Calu3 (cell line): ENCODE measurements at regions of chr14 and their contacts with region 1.

Region 1: GRCh38 chr14:102849526-102850379 is 72.5 kb downstream of the TRAF3 start:
- DNase-seq: no peak
- H3K4me3 Mint-ChIP-seq: no peak overlapping the region
- H3K27ac Mint-ChIP-seq: no peak overlapping the region
- H3K4me1 Mint-ChIP-seq: peaks cover 15% of the 10 kb centered on the region
- H3K27me3 Mint-ChIP-seq: no peaks in the 10 kb centered on the region
- CTCF ChIP-seq: no peak

Region 2: DNA sequence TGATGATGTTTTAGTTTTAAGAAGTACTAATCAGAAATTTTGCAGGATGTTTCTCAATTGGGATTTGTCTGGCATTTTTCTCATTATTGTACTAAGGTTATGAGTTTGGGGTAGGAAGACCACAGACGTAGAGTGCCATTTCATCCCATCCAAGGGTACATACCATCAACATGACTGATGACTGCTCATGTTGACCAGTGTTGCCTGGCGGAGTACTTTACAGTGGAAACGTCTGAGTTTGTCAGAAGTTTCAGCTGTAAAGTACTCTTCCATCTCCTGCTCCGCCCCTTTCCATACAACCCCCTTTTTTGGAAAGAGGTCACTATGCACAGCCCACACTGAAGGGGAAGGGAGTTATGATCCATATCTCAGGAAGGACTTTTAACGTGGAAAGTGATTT is 183.1 kb before region 1 on chr14:
- CTCF ChIA-PET with region 1: no interaction called
- intact Hi-C with region 1: loop called (anchors 2 kb)
- DNase-seq: no peak
- H3K4me3 Mint-ChIP-seq: no peak overlapping the region
- H3K27ac Mint-ChIP-seq: no peak overlapping the region
- H3K4me1 Mint-ChIP-seq: peaks cover 42% of the 10 kb centered on the region
- H3K27me3 Mint-ChIP-seq: no peaks in the 10 kb centered on the region
- CTCF ChIP-seq: no peak

Region 3: GRCh38 chr14:102795060-102795925 is 54.5 kb before region 1 on chr14:
- CTCF ChIA-PET with region 1: interaction called, 10 read pairs
- intact Hi-C with region 1: no loop called
- DNase-seq: peak; percentile 62
- H3K4me3 Mint-ChIP-seq: no peak overlapping the region
- H3K27ac Mint-ChIP-seq: peak overlapping the region; percentile 77
- H3K4me1 Mint-ChIP-seq: no peaks in the 10 kb centered on the region
- H3K27me3 Mint-ChIP-seq: no peaks in the 10 kb centered on the region
- CTCF ChIP-seq: no peak

Region 4: GRCh38 chr14:102939820-102940561 is 90.2 kb after region 1 on chr14:
- CTCF ChIA-PET with region 1: no interaction called
- intact Hi-C with region 1: no loop called
- DNase-seq: no peak
- H3K4me3 Mint-ChIP-seq: no peak overlapping the region
- H3K27ac Mint-ChIP-seq: no peak overlapping the region
- H3K4me1 Mint-ChIP-seq: no peaks in the 10 kb centered on the region
- H3K27me3 Mint-ChIP-seq: no peaks in the 10 kb centered on the region
- CTCF ChIP-seq: no peak

Region 5: DNA sequence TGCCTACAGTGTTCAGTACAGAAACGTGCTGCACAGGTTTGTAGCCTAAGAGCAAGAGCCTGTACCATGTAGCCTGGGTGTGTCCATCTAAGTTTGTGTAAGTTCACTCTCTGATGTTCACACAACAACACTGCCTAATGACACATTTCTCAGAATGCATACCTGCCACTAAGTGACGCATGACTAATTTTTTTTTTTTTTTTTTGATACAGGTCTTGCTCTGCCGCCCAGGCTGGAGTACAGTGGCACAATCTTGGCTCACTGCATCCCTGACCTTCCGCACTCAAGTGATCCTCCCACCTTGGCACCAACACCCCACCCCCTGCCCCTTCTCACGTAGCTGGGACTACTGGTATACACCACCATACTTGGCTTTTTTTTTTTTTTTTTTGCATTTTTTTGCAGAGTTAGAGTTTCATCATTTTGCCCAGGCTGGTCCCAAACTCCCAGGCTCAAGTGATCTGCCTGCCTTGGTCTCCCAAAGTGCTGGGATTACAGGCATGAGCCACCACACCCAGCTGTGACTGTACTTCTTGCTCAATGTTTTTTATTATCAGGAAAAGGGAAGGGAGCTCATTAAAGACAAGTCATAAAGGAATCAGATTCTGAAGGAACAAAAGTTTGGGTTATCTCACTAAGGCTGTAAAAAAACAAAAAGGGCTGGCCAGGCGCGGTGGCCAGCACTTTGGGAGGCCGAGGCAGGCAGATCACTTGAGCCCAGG is 217.6 kb after region 1 on chr14:
- CTCF ChIA-PET with region 1: no interaction called
- intact Hi-C with region 1: no loop called
- DNase-seq: peak; percentile 46
- H3K4me3 Mint-ChIP-seq: peak overlapping the region; percentile 49
- H3K27ac Mint-ChIP-seq: peak overlapping the region; percentile 93
- H3K4me1 Mint-ChIP-seq: peaks cover 32% of the 10 kb centered on the region
- H3K27me3 Mint-ChIP-seq: no peaks in the 10 kb centered on the region
- CTCF ChIP-seq: no peak